WTC11 (cell line): ENCODE measurements at regions of chr1 and their contacts with region 1.

Region 1: DNA sequence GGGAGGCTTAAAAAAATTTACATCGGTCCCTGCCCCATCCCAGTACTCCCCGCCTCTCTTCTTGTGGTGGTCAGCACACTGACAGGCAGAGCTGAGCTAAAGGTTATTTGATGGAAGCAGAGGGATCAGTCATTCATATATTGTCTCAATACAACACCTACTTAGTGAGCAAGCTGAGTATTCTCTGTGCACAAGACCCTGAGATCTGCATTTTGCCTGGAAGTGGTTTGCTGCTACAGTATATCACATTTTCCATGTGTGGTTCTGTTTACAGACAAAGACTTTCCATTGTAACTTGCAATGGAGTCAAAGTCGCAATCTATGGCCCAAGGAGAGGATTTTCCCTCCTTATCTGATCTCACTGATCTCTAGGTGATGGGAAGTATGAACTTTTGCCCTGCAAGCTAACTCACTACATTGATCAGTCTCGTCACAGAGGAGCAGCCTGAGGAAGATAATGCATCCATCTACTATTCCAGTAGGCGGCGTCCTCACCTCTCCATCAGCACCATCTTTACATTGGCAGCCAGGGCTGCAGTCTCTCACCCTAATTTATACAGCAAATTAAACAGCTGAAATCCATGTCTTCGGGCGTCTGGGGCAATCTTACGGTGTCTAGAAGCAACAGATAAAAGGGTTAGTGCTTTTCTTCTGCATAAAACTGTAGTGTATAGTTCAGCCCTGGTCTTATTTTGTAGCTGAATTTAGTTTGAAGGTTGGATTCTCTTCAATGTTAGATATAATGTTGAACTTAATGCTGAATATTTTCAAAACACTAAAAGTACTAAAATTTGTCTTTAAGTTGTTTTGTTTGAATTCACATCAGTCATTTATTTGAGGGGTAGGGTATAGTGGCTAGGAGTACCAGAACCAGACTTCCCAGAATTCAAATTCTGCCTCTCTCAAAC is 3.2 kb upstream of the TRAF5 start:
- DNase-seq: peak; percentile 62
- ATAC-seq: peak; percentile 75
- H3K4me3 Mint-ChIP-seq: no peak overlapping the region
- H3K27ac Mint-ChIP-seq: no peak overlapping the region
- H3K4me1 Mint-ChIP-seq: peaks cover 23% of the 10 kb centered on the region
- H3K27me3 Mint-ChIP-seq: peaks cover 17% of the 10 kb centered on the region
- CTCF ChIP-seq: peak; percentile 39; the same call in 1 of the 2 replicates

Region 2: GRCh38 chr1:211099393-211099792 is 224.0 kb before region 1 on chr1:
- CTCF ChIA-PET with region 1: no interaction called
- POLR2A ChIA-PET with region 1: no interaction called
- DNase-seq: no peak
- ATAC-seq: no peak
- H3K4me3 Mint-ChIP-seq: no peak overlapping the region
- H3K27ac Mint-ChIP-seq: no peak overlapping the region
- H3K4me1 Mint-ChIP-seq: peaks cover 6% of the 10 kb centered on the region; the same call in 1 of the 2 replicates
- H3K27me3 Mint-ChIP-seq: no peaks in the 10 kb centered on the region
- CTCF ChIP-seq: no peak

Region 3: DNA sequence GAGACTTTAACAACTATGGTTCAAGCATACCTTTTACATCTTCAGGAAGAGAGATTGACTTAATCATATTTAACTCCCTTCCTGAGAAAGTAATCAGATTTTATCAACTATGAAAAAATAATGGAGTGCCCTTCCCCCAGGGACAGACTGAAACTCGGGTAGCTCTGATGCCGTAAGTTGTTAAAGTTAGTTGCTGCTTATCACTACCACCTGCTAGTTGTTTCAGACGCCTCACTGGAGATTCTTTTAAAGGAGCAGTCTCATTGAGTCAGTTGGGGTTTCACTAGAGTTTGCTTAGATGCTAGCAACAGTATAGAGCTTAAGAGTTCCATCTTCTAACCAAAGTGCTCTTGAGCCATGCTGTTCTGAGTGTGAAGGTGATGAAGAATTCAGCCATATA is 13.8 kb before region 1 on chr1:
- CTCF ChIA-PET with region 1: interaction called, 10 read pairs
- POLR2A ChIA-PET with region 1: no interaction called
- DNase-seq: no peak
- ATAC-seq: no peak
- H3K4me3 Mint-ChIP-seq: no peak overlapping the region
- H3K27ac Mint-ChIP-seq: no peak overlapping the region
- H3K4me1 Mint-ChIP-seq: peaks cover 6% of the 10 kb centered on the region
- H3K27me3 Mint-ChIP-seq: no peaks in the 10 kb centered on the region
- CTCF ChIP-seq: no peak

Region 4: GRCh38 chr1:211345719-211346118 is 22.3 kb after region 1 on chr1:
- CTCF ChIA-PET with region 1: interaction called, 18 read pairs
- POLR2A ChIA-PET with region 1: no interaction called
- DNase-seq: peak; percentile 52
- ATAC-seq: peak; percentile 99
- H3K4me3 Mint-ChIP-seq: no peak overlapping the region
- H3K27ac Mint-ChIP-seq: peak overlapping the region; percentile 35
- H3K4me1 Mint-ChIP-seq: peaks cover 28% of the 10 kb centered on the region
- H3K27me3 Mint-ChIP-seq: no peaks in the 10 kb centered on the region
- CTCF ChIP-seq: no peak

Region 5: GRCh38 chr1:211469938-211470529 is 146.6 kb after region 1 on chr1:
- CTCF ChIA-PET with region 1: interaction called, 10 read pairs
- POLR2A ChIA-PET with region 1: no interaction called
- DNase-seq: peak; percentile 92
- ATAC-seq: peak; percentile 100
- H3K4me3 Mint-ChIP-seq: no peak overlapping the region
- H3K27ac Mint-ChIP-seq: no peak overlapping the region
- H3K4me1 Mint-ChIP-seq: peaks cover 10% of the 10 kb centered on the region
- H3K27me3 Mint-ChIP-seq: no peaks in the 10 kb centered on the region
- CTCF ChIP-seq: peak; percentile 81

Region 6: GRCh38 chr1:211476200-211476849 is 152.9 kb after region 1 on chr1:
- CTCF ChIA-PET with region 1: interaction called, 23 read pairs
- POLR2A ChIA-PET with region 1: no interaction called
- DNase-seq: peak; percentile 78
- ATAC-seq: peak; percentile 80
- H3K4me3 Mint-ChIP-seq: no peak overlapping the region
- H3K27ac Mint-ChIP-seq: no peak overlapping the region
- H3K4me1 Mint-ChIP-seq: peaks cover 6% of the 10 kb centered on the region
- H3K27me3 Mint-ChIP-seq: peaks cover 15% of the 10 kb centered on the region
- CTCF ChIP-seq: peak; percentile 74

Region 7: DNA sequence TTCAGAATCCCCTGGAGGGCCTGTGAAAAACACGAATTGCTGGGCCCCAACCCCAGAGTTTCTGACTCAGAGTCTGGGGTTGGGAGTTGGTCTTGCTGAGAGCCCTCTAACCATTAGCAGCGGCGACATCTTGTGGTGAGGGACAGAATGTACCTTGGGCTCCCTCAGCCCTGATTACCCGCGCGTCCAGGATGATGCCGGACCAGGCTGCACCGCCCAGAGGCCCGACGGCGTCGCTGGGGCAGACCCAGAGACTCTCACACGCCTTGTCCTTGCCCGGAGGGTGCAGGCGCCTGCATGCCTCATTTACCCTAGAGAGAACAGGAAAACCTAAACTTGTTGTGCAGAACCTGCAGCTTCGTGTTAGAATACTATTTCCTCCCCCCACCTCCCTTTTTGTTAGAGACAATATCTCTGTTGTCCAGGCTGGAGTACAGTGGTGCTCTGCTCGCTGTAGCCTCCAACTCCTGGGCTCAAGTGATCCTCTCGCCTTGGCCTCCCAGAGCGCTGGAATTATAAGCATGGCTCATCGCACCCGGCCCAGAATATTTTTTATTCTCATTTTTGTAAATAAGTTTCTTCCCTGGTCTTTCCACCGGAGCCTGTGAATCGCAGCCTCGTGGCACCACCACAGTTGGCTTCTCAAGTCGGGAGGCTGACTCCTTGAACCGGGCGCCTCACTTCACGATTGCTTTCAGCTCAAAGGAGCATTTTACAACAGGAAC is 190.8 kb after region 1 on chr1:
- CTCF ChIA-PET with region 1: interaction called, 33 read pairs
- POLR2A ChIA-PET with region 1: no interaction called
- DNase-seq: peak; percentile 91
- ATAC-seq: peak; percentile 87
- H3K4me3 Mint-ChIP-seq: peak overlapping the region; percentile 43
- H3K27ac Mint-ChIP-seq: no peak overlapping the region
- H3K4me1 Mint-ChIP-seq: peaks cover 14% of the 10 kb centered on the region
- H3K27me3 Mint-ChIP-seq: peaks cover 25% of the 10 kb centered on the region
- CTCF ChIP-seq: peak; percentile 60